ENCODE measurements at regions of chr14 and their contacts with region 1.

Region 1: DNA sequence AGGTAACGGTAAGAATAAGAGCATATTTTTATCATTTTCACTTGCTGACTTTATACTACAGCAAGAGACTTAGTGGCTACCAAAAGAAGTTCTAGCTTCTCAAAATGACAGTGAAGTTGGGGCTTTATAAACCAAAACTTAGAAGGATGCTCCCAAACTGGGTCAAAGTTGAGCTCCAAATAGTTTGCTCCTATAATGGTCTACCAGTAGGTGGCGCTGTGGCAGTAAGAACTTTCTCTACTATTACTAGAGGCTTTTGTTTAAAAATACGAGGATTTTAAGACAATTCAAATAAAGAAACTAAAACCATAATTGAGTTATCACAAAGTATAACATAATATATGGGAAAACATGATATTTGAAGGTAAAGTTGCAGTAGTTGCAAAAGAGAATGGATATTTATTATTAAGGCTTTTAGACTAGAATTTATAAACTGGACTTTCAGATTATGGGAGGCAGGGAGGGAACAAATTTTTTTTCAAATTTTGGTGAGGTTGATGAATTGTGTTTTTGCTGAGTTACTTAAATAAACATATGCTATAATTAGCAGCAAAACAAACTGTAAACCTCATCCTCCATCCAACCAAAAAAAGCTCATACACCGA is 75.0 kb downstream of the TGFB3 start:
- DNase-seq: peak in 1 of 2 experiments; percentile 77
- H3K4me3 ChIP-seq: no peak overlapping the region
- H3K27ac ChIP-seq: no peak overlapping the region
- H3K4me1 ChIP-seq: peaks cover 0 to 4% (median 1%) of the 10 kb centered on the region in 4 experiments; a peak in 1 of 7 replicates
- H3K27me3 ChIP-seq: no peaks in the 10 kb centered on the region
- CTCF ChIP-seq: peak in 2 of 3 experiments; percentile 65 to 76; a peak in 3 of 4 replicates
- EP300 ChIP-seq: no peak
- POLR2A ChIP-seq: no peak
- RAD21 ChIP-seq: peak; percentile 65 to 72

Region 2: DNA sequence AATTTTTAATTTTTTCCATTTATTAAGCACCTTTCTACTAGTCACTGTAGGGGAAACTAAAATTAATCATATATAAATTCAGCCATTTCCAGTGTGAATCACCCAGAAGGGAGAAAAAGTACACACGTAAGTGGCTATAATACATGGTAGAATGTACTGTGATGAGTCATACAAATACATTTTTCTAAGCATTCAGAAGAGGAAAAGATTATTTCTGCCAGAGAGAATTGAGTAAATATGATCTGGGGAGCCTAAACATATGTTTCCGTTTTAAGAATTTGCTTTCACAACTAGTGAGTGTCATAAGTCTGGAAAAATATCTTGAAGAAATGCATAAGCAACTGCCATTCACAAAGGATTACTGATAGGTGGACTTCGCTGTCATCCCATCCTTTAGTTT is 27.7 kb before region 1 on chr14:
- CTCF ChIA-PET with region 1: interaction called, 33 read pairs
- POLR2A ChIA-PET with region 1: interaction called, 3 read pairs
- DNase-seq: no peak
- H3K4me3 ChIP-seq: no peak overlapping the region
- H3K27ac ChIP-seq: no peak overlapping the region
- H3K4me1 ChIP-seq: no peaks in the 10 kb centered on the region
- H3K27me3 ChIP-seq: no peaks in the 10 kb centered on the region
- CTCF ChIP-seq: no peak
- EP300 ChIP-seq: no peak
- POLR2A ChIP-seq: no peak
- RAD21 ChIP-seq: no peak

Region 3: DNA sequence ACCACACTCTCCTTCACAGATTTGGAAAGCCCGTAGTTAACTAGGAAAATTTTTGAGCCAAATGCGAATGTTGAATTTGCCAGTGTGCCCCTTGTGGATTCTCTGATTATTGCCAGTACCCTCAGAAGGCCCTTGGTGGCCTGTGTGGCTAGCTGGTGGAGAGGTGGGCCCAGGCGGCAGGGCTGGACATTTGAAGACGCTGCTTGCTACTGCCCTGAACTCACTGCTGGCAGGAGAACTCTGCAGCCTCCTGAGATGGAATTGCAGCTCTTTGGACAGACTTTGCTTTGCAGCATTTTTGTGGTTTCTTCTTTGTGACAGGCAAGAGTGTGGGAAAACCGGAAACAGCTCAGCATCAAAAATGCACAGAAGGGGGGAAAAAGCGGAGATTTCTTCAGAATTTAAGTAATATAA is 22.6 kb before region 1 on chr14:
- CTCF ChIA-PET with region 1: interaction called, 33 read pairs
- POLR2A ChIA-PET with region 1: interaction called, 3 read pairs
- DNase-seq: no peak
- H3K4me3 ChIP-seq: no peak overlapping the region
- H3K27ac ChIP-seq: no peak overlapping the region
- H3K4me1 ChIP-seq: no peaks in the 10 kb centered on the region
- H3K27me3 ChIP-seq: no peaks in the 10 kb centered on the region
- CTCF ChIP-seq: peak; percentile 16 to 50 (median 18); a peak in 3 of 4 replicates
- EP300 ChIP-seq: no peak
- POLR2A ChIP-seq: no peak
- RAD21 ChIP-seq: peak in 1 of 2 experiments; percentile 33; a peak in 2 of 4 replicates

Region 4: DNA sequence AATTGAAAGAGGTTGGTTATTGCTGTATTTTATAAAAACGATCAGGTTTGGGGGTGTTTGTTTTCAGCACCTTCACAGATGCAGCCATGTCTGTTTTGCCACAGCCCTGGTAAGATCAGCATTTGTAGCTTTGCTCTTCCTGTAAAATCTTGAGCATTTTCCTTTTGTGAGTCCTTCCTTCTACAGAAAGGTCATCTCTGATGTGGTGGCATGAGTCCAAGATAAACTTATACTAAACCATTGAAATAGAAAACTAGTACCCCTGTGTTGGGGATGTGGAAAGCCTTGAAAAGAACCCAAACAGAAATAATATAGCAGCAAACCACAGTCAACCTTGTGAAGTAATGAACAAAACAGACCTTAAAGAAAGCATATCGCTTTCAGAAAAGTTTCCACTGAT is 10.4 kb before region 1 on chr14:
- CTCF ChIA-PET with region 1: interaction called, 11 read pairs
- POLR2A ChIA-PET with region 1: interaction called, 3 read pairs
- DNase-seq: no peak
- H3K4me3 ChIP-seq: no peak overlapping the region
- H3K27ac ChIP-seq: no peak overlapping the region
- H3K4me1 ChIP-seq: no peaks in the 10 kb centered on the region
- H3K27me3 ChIP-seq: no peaks in the 10 kb centered on the region
- CTCF ChIP-seq: no peak
- EP300 ChIP-seq: no peak
- POLR2A ChIP-seq: no peak
- RAD21 ChIP-seq: no peak

Region 5: GRCh38 chr14:75934998-75935628 is 28.3 kb after region 1 on chr14:
- CTCF ChIA-PET with region 1: interaction called, 13 read pairs
- POLR2A ChIA-PET with region 1: no interaction called
- DNase-seq: no peak
- H3K4me3 ChIP-seq: no peak overlapping the region
- H3K27ac ChIP-seq: no peak overlapping the region
- H3K4me1 ChIP-seq: peaks cover 0 to 2% (median 0%) of the 10 kb centered on the region in 4 experiments; a peak in 1 of 7 replicates
- H3K27me3 ChIP-seq: no peaks in the 10 kb centered on the region
- CTCF ChIP-seq: no peak
- EP300 ChIP-seq: no peak
- POLR2A ChIP-seq: no peak
- RAD21 ChIP-seq: no peak

Region 6: GRCh38 chr14:75982266-75983018 is 75.7 kb after region 1 on chr14:
- CTCF ChIA-PET with region 1: interaction called, 261 read pairs
- POLR2A ChIA-PET with region 1: interaction called, 4 read pairs
- DNase-seq: peak in 1 of 2 experiments; percentile 92
- H3K4me3 ChIP-seq: peak overlapping the region; percentile 47 to 89 (median 66)
- H3K27ac ChIP-seq: no peak overlapping the region
- H3K4me1 ChIP-seq: peaks cover 0 to 11% (median 2%) of the 10 kb centered on the region in 4 experiments; a peak in 6 of 7 replicates
- H3K27me3 ChIP-seq: peaks cover 0 to 26% (median 17%) of the 10 kb centered on the region in 4 experiments; a peak in 5 of 7 replicates
- CTCF ChIP-seq: peak; percentile 54 to 67 (median 63)
- EP300 ChIP-seq: no peak
- POLR2A ChIP-seq: no peak
- RAD21 ChIP-seq: peak; percentile 74 to 81

Region 7: GRCh38 chr14:76012354-76012753 is 105.6 kb after region 1 on chr14:
- CTCF ChIA-PET with region 1: no interaction called
- POLR2A ChIA-PET with region 1: no interaction called
- DNase-seq: peak in 1 of 2 experiments; percentile 47
- H3K4me3 ChIP-seq: no peak overlapping the region
- H3K27ac ChIP-seq: no peak overlapping the region
- H3K4me1 ChIP-seq: 0 out of 7 replicates have a peak, but pooled peaks cover 0 to 2% (median 0%) of the 10 kb centered on the region in 4 experiments
- H3K27me3 ChIP-seq: no peaks in the 10 kb centered on the region
- CTCF ChIP-seq: no peak
- EP300 ChIP-seq: no peak
- POLR2A ChIP-seq: no peak
- RAD21 ChIP-seq: no peak

Region 8: GRCh38 chr14:76304536-76305267 is 397.9 kb after region 1 on chr14:
- CTCF ChIA-PET with region 1: no interaction called
- POLR2A ChIA-PET with region 1: no interaction called
- DNase-seq: peak in 1 of 2 experiments; percentile 27
- H3K4me3 ChIP-seq: no peak overlapping the region
- H3K27ac ChIP-seq: no peak overlapping the region
- H3K4me1 ChIP-seq: no peaks in the 10 kb centered on the region; a peak in 2 of 7 replicates
- H3K27me3 ChIP-seq: peaks cover 3 to 10% (median 7%) of the 10 kb centered on the region in 4 experiments
- CTCF ChIP-seq: no peak
- EP300 ChIP-seq: no peak
- POLR2A ChIP-seq: no peak
- RAD21 ChIP-seq: no peak